ENCODE measurements at regions of chr22 and their contacts with region 1.

Region 1: GRCh38 chr22:36331306-36331911 is 56.4 kb downstream of the MYH9 start:
- DNase-seq: peak; percentile 92
- H3K4me3 ChIP-seq: no peak overlapping the region
- H3K27ac ChIP-seq: peak overlapping the region; percentile 98
- H3K27me3 ChIP-seq: no peaks in the 10 kb centered on the region
- CTCF ChIP-seq: no peak

Region 2: GRCh38 chr22:36454916-36455570 is 123.6 kb after region 1 on chr22:
- in situ Hi-C with region 1: loop called (anchors 25 kb)
- DNase-seq: peak; percentile 62
- H3K4me3 ChIP-seq: peak overlapping the region; percentile 43
- H3K27ac ChIP-seq: no peak overlapping the region
- H3K27me3 ChIP-seq: no peaks in the 10 kb centered on the region
- CTCF ChIP-seq: peak; percentile 4

Measured in brain microvascular endothelial cell (primary cell).